PC-9 (cell line): ENCODE measurements at regions of chr7 and their contacts with region 1.

Region 1: DNA sequence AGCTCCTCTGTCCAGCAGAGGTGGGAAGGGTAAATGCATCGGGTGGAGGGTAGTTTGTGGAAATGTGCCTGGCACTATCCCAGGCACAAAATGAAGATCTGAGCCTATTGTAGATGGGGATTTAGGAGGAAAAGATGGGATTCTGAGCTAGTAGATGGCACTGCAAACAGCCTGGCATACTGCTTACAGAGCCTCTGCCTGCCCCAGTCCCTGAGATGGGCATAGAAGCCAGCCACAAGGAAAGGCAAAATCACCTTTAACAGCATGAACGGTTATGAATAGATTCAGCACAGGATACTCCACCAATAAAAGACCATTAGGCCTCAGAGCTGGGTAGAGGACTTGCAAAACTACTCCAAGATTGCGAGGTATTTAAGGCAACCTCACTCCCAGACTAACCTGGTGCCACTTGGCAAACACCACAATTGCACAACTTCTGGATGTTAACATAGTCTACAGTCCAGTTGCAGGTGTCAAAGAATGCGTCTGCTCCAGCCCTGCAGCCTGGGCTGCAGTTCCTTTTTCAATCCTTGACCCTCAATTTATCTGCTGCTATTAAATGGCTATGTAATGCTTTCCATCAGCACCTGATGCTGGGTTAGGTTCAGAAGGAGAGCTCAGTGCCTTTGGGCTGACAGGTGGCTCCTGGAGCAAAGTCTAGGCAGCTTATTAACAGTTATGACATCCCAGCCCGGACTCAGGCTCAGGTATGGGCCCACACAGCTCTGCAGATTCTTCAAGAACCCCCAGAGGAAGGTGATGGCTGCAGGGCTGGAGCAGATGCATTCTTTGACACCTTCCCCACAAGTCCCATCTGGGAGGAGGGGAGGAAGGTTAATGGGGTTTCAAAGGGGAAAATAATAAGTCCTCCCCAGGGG is 34.0 kb downstream of the CDHR3 start:
- DNase-seq: peak in 1 of 2 experiments; percentile 79
- H3K4me3 ChIP-seq: no peak overlapping the region
- H3K27ac ChIP-seq: no peak overlapping the region
- H3K4me1 ChIP-seq: no peaks in the 10 kb centered on the region
- H3K27me3 ChIP-seq: peaks cover 3% of the 10 kb centered on the region; the same call in 1 of the 2 replicates
- CTCF ChIP-seq: no peak

Region 2: DNA sequence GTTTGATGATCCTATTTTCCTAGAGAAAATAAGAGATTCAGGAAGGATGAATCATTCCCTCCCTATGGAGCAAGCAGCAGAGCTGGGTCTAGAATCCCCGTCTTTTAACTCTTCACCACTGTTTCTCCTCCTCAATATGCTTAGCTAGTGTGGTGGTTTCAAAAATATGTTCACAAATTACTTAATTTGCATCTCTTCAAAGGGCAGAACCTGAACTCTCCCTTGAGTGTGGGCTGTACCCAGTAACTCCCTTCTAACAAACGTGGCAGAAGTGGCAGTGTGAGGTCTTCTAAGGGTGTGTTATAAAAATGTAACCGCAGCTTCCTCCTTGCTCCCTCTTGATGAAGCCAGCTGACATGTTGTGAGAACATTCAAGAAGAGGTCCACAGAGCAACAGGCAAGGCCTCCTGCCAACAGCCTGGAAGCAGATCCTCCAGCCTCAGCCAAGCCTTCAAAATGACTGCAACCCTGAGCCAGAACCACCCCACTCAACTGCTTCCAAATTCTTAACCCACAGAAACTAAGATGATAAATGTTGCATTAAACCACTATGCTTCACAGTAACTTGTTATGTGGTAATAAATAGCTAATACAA is 645.0 kb before region 1 on chr7:
- CTCF ChIA-PET with region 1: no interaction called
- POLR2A ChIA-PET with region 1: no interaction called
- intact Hi-C with region 1: no loop called
- DNase-seq: peak in 1 of 2 experiments; percentile 37
- H3K4me3 ChIP-seq: no peak overlapping the region
- H3K27ac ChIP-seq: no peak overlapping the region
- H3K4me1 ChIP-seq: no peaks in the 10 kb centered on the region
- H3K27me3 ChIP-seq: no peaks in the 10 kb centered on the region
- CTCF ChIP-seq: no peak

Region 3: DNA sequence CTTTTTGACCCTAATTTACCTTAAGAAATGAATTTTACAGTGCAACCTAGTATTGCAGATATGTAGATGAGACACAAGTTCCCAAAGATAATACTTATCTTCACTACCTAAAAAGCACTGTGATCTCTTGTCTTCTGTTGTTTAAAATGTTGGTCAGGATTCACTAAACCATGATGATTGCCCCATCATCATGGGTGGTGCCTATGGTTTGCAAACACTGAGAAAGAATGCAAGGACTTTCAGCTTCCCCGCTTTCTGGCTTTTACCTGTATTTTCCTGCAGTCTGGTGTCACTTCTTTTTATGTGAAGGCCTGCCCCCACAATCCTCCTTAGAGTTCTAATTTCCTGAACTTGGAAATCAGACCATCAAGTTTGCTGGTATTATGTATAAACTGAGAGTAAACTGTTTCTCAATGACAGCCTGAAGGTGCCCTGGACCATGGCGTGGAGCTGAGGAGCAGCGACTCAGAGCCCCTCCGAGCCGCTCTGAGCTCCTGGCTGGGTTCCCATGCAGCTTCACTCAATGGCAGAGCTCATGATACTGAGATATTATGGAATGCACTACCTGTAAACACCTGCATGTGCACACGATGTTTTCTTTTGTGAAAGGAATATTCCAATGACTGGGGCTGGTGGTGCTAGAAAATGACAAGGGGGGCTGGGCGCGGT is 297.4 kb before region 1 on chr7:
- CTCF ChIA-PET with region 1: interaction called, 13 read pairs
- POLR2A ChIA-PET with region 1: no interaction called
- intact Hi-C with region 1: no loop called
- DNase-seq: no peak
- H3K4me3 ChIP-seq: no peak overlapping the region
- H3K27ac ChIP-seq: no peak overlapping the region
- H3K4me1 ChIP-seq: no peaks in the 10 kb centered on the region
- H3K27me3 ChIP-seq: no peaks in the 10 kb centered on the region
- CTCF ChIP-seq: no peak

Region 4: DNA sequence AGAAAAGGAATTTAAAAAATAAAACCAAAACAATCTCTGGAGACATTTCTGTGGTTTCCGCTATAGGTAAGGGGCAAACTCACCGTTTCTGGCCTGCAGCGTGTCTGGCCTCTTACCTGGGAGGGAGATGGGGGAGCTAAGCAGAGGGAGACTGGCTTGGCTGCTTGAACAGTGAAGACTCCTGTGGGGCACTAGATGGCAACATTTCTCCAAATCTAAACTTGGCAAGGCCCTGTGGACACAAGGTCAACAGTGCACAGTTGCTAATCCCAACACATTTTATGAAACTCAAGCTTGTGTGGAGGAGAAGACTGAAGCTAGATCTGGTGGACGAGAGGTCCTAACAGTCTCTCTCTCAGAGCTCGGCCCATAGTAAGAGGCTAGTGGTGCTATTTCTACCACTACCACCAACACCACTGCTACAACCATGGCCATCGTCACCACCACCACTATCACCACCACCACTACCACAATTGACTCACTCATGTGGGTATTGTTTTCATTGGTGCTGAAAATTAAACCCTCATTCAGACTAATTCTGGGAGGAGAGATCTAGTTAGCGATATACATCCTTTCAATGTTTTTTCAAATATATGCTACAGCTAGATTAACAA is 62.4 kb before region 1 on chr7:
- CTCF ChIA-PET with region 1: no interaction called
- POLR2A ChIA-PET with region 1: interaction called, 21 read pairs
- intact Hi-C with region 1: no loop called
- DNase-seq: peak in 1 of 2 experiments; percentile 11
- H3K4me3 ChIP-seq: no peak overlapping the region
- H3K27ac ChIP-seq: no peak overlapping the region
- H3K4me1 ChIP-seq: no peaks in the 10 kb centered on the region
- H3K27me3 ChIP-seq: no peaks in the 10 kb centered on the region
- CTCF ChIP-seq: peak; percentile 53